ENCODE measurements at regions of chr6 and their contacts with region 1.

Region 1: GRCh38 chr6:79466207-79466834 is 70.9 kb downstream of the LCA5 start:
- DNase-seq: no peak
- H3K4me3 Mint-ChIP-seq: no peak overlapping the region
- H3K27ac Mint-ChIP-seq: peak overlapping the region; percentile 23
- H3K4me1 Mint-ChIP-seq: peaks cover 81% of the 10 kb centered on the region
- H3K27me3 Mint-ChIP-seq: no peaks in the 10 kb centered on the region
- CTCF ChIP-seq: peak; percentile 31

Region 2: DNA sequence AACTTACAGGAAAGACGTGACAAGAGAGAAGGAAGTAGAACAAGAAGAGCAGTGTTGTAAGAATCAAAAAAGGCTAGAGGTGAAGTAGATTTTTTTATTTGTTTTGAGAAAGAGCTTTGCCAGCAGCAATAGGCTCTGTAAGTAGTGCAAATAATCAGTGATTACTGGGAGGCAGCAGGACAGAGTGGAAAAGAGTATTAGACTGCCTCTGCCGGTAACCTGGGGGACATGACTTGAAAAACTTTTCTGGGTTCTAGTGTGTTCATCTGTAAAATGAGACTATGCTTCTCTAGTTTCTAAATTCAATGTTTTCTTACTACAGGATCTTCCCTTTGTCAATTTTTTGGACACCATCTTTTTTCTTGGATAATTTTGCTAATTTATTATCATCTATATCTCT is 604.8 kb before region 1 on chr6:
- CTCF ChIA-PET with region 1: no interaction called
- intact Hi-C with region 1: loop called (anchors 5 kb)
- DNase-seq: no peak
- H3K4me3 Mint-ChIP-seq: no peak overlapping the region
- H3K27ac Mint-ChIP-seq: no peak overlapping the region
- H3K4me1 Mint-ChIP-seq: peaks cover 6% of the 10 kb centered on the region
- H3K27me3 Mint-ChIP-seq: no peaks in the 10 kb centered on the region
- CTCF ChIP-seq: no peak

Region 3: GRCh38 chr6:79201147-79201546 is 265.2 kb before region 1 on chr6:
- CTCF ChIA-PET with region 1: no interaction called
- intact Hi-C with region 1: loop called (anchors 2 kb)
- DNase-seq: no peak
- H3K4me3 Mint-ChIP-seq: no peak overlapping the region
- H3K27ac Mint-ChIP-seq: no peak overlapping the region
- H3K4me1 Mint-ChIP-seq: peaks cover 13% of the 10 kb centered on the region
- H3K27me3 Mint-ChIP-seq: no peaks in the 10 kb centered on the region
- CTCF ChIP-seq: no peak

Region 4: DNA sequence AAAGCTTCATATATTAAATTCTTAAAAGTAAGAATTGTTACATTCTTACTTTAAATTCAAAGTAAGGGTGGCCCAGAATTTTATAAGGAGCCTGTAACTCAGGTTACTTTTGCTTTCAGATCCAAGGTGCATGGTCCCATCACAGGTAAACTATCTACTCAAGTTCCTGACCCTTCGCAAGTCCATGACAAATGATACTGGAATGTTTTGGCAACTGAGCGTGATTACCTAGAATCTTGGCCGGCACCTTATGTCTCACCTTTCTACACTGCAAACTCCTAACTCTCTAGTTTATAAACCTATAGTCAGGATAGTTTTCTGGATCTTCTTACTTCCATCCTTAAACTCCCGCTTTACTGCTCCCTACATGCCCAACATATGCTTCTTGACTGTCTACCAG is 164.0 kb before region 1 on chr6:
- CTCF ChIA-PET with region 1: no interaction called
- intact Hi-C with region 1: loop called (anchors 1 kb)
- DNase-seq: peak; percentile 44
- H3K4me3 Mint-ChIP-seq: no peak overlapping the region
- H3K27ac Mint-ChIP-seq: peak overlapping the region; percentile 72
- H3K4me1 Mint-ChIP-seq: peaks cover 60% of the 10 kb centered on the region
- H3K27me3 Mint-ChIP-seq: no peaks in the 10 kb centered on the region
- CTCF ChIP-seq: no peak

Region 5: GRCh38 chr6:79384845-79385244 is 81.5 kb before region 1 on chr6:
- CTCF ChIA-PET with region 1: no interaction called
- intact Hi-C with region 1: no loop called
- DNase-seq: no peak
- H3K4me3 Mint-ChIP-seq: no peak overlapping the region
- H3K27ac Mint-ChIP-seq: no peak overlapping the region
- H3K4me1 Mint-ChIP-seq: peaks cover 15% of the 10 kb centered on the region
- H3K27me3 Mint-ChIP-seq: no peaks in the 10 kb centered on the region
- CTCF ChIP-seq: no peak

Region 6: GRCh38 chr6:79431537-79431933 is 34.8 kb before region 1 on chr6:
- CTCF ChIA-PET with region 1: interaction called, 7 read pairs
- intact Hi-C with region 1: loop called (anchors 2 kb)
- DNase-seq: peak; percentile 40
- H3K4me3 Mint-ChIP-seq: no peak overlapping the region
- H3K27ac Mint-ChIP-seq: peak overlapping the region; percentile 33
- H3K4me1 Mint-ChIP-seq: peaks cover 36% of the 10 kb centered on the region
- H3K27me3 Mint-ChIP-seq: no peaks in the 10 kb centered on the region
- CTCF ChIP-seq: no peak

Region 7: DNA sequence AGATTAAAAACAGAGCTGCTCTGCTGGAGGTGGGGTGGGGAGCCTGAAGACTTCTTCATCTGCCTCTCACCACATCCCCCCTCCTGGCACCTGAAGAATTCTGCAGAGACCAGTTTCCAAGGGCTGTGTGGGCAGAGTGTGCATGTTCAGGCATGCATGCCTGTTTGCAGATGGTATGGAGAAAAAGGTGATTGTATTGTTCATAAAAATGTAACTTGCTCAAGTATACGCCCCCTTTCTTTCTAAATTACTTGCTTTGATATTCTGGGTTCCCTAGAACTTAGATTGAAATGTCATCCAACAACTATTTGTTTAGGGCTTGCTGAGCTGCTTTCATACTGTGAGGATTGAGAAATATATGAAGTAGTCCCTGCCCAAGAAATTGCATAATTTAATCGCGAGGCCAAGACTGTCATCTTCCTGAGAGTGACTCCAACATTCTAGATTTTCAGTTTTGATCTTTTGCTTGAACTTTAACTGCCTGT is 12.7 kb before region 1 on chr6:
- CTCF ChIA-PET with region 1: no interaction called
- intact Hi-C with region 1: no loop called
- DNase-seq: no peak
- H3K4me3 Mint-ChIP-seq: no peak overlapping the region
- H3K27ac Mint-ChIP-seq: no peak overlapping the region
- H3K4me1 Mint-ChIP-seq: peaks cover 8% of the 10 kb centered on the region
- H3K27me3 Mint-ChIP-seq: no peaks in the 10 kb centered on the region
- CTCF ChIP-seq: no peak

Region 8: GRCh38 chr6:79570129-79571029 is 104.1 kb after region 1 on chr6:
- CTCF ChIA-PET with region 1: no interaction called
- intact Hi-C with region 1: no loop called
- DNase-seq: peak; percentile 87
- H3K4me3 Mint-ChIP-seq: peak overlapping the region; percentile 37
- H3K27ac Mint-ChIP-seq: peak overlapping the region; percentile 98
- H3K4me1 Mint-ChIP-seq: peaks cover 70% of the 10 kb centered on the region
- H3K27me3 Mint-ChIP-seq: no peaks in the 10 kb centered on the region
- CTCF ChIP-seq: peak; percentile 53

Region 9: GRCh38 chr6:79586548-79586947 is 120.2 kb after region 1 on chr6:
- CTCF ChIA-PET with region 1: no interaction called
- intact Hi-C with region 1: no loop called
- DNase-seq: no peak
- H3K4me3 Mint-ChIP-seq: no peak overlapping the region
- H3K27ac Mint-ChIP-seq: no peak overlapping the region
- H3K4me1 Mint-ChIP-seq: no peaks in the 10 kb centered on the region
- H3K27me3 Mint-ChIP-seq: no peaks in the 10 kb centered on the region
- CTCF ChIP-seq: peak; percentile 45

Region 10: GRCh38 chr6:79713701-79714322 is 247.5 kb after region 1 on chr6:
- CTCF ChIA-PET with region 1: no interaction called
- intact Hi-C with region 1: loop called (anchors 5 kb)
- DNase-seq: peak; percentile 68
- H3K4me3 Mint-ChIP-seq: no peak overlapping the region
- H3K27ac Mint-ChIP-seq: no peak overlapping the region
- H3K4me1 Mint-ChIP-seq: peaks cover 16% of the 10 kb centered on the region
- H3K27me3 Mint-ChIP-seq: no peaks in the 10 kb centered on the region
- CTCF ChIP-seq: no peak

Measured in Calu3 (cell line).